Lower leg skin (tissue), 4 donors: ENCODE measurements at regions of chr6 and their contacts with region 1.

Region 1: DNA sequence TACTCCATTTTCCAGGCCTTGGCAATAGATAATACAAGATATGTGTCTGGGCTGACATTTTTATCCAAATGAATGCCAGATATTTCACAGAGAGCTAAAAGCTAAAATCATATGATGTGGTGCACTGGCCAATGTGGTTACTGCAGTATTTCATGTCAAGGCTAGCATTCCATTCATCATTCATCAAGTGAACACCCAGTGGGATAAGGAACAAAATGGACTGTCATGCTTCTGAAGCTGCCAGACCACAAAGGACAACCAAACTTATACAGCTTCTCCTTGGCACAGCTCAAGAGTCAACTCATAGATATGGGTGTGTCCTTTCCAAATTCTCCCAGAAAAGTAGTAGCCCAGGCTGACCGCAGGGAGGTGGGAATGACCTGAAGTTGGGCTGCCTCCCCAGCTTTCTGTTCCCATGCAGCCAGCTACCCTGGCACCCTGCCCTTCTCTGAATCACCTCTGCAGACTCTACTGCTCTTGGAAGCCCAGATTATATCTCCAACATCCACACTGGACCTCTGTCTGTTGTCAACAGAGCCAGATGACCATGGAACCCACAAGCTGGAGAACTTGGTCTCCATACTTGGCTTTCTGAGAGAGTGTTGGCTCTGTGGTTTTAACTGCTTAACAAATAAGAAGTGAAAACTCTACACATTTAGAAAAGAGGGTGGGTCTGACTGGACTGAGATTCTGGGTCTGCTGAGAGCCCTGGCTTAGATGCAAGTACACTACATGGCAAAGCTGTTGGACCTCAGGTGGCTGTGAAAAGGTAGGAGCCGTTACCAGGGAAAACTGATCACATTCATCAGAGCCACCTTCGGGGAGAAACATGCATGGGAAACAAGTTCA is 122.8 kb downstream of the ALDH8A1 start:
- DNase-seq: peak; percentile 87 to 96
- H3K4me3 ChIP-seq: no peak overlapping the region
- CTCF ChIP-seq: no peak
- POLR2A ChIP-seq: no peak

Region 2: GRCh38 chr6:134161036-134161435 is 666.1 kb before region 1 on chr6:
- intact Hi-C with region 1: loop called (anchors 5 kb)
- DNase-seq: no peak
- H3K4me3 ChIP-seq: no peak overlapping the region
- CTCF ChIP-seq: no peak
- POLR2A ChIP-seq: no peak

Region 3: DNA sequence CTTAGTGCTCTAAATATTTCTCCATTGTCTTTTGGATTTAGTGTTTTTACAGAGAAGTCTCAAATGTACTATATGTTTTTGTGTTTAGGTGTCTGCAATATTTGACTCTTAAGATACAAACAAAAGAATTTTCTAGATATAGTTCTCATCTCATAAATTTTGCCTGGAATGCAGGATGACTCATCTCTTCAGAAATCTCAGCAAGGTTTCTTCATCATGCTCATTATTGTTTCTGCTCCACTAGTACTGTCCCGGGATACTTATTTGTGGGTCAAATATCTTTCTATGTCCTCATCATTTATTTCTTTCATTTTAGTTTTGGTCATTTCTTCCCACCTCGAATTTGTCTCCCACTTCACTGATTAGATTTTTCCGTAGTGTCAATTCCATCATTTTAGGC is 660.9 kb after region 1 on chr6:
- intact Hi-C with region 1: no loop called
- DNase-seq: no peak
- H3K4me3 ChIP-seq: no peak overlapping the region
- CTCF ChIP-seq: no peak
- POLR2A ChIP-seq: no peak